Activated CD4-positive, alpha-beta T cell treated with anti-CD3 and anti-CD28 coated beads, Interleukin-2, amount 10 ng/mL, durations not matched to agents 7 days and 5 days (primary cell): ENCODE measurements at regions of chr4 and their contacts with region 1.

Region 1: DNA sequence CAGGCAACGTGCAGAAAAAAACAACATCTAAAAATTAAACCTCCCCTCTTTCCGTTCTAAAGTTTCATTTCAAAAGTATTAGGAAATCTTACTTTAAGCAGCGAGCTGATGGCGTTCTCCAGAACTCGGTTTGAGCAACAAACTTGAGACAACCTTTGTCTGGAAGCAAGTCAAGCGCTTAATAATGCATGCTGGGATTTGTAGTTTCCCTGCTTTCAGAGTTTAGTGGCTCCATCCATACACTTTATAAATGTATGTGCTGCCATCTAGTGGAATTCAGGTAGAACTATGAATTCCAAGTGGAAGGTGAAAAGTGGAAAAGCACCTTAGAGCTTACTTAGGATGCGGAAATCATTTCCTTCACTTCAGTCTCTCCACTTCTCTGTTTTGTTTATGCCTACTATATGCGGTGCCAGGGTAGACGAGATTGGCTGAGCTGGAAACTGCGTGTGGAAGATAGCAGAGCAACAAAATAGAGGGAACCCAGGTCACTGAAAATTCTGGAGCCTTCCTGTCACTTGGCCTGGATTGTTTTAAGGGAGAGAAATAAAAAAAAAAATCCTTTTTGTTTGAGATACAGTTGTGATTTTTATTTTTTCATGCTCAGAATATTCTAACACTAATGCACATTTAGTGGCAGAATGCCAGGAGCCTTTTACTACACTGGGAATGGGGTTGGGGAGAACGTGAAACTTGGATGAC is at the start of gene BDH2:
- DNase-seq: peak; percentile 77
- H3K4me3 Mint-ChIP-seq: peak within 1 kb of the TSS; percentile 85
- H3K27ac Mint-ChIP-seq: peak within 1 kb of the TSS; percentile 89
- H3K4me1 Mint-ChIP-seq: peaks cover 18% of the 10 kb centered on the region
- H3K27me3 Mint-ChIP-seq: no peaks in the 10 kb centered on the region
- total RNA-seq, gene BDH2: 15.5 to 17.2 TPM

Region 2: DNA sequence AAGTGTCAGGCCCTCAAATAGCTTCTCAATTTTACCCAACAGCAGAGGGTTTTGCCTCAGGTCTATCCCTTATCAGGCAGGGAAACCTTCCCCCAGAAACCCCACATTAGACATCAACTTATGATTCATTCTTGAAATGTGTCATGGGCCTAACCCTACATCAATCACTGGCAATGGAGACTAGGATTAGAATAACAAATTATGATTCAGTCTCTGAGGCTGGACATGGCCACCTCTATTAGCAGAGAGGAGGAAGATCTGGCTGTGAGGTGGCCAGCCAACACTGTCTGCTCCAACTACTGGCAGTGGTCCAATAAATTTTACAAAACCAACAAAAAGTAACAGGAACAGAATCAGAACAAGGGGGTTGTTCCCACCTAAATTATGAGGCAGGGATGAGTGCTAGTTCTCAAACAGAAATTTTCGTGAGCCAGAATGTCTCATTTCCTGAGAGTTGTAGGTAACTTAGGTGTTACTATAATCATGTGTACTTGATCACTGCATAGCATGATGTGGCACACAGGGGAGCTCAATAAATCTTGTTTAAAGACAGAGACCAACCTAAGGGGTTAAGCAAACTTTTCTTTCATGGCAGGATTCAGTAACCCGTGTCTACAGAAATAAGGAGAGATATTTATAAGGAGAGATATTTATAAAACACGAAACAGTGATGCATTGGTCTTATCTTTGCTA is 471.9 kb before region 1 on chr4:
- CTCF ChIA-PET with region 1: interaction called, 3 read pairs
- POLR2A ChIA-PET with region 1: interaction called, 12 read pairs
- DNase-seq: no peak
- H3K4me3 Mint-ChIP-seq: no peak overlapping the region
- H3K27ac Mint-ChIP-seq: no peak overlapping the region
- H3K4me1 Mint-ChIP-seq: peaks cover 69% of the 10 kb centered on the region
- H3K27me3 Mint-ChIP-seq: no peaks in the 10 kb centered on the region

Region 3: DNA sequence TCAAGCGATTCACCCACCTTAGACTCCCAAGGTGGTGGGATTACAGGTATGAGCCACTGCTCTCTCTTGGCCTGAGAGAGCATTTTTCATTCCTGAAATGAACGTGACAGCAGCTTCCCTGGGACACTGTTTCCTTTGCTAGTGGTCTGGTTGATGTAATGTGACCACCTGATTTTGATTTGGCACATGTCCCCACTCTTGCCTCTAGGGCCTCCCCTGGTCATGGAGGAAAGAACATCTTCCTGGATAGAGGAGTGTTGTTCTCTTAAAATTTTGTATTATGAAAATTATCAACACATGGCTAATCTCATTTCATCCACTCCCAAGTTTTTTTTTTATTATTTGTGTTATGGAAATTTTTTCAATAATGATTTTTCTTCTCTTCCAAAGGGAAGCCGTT is 47.1 kb before region 1 on chr4:
- CTCF ChIA-PET with region 1: no interaction called
- POLR2A ChIA-PET with region 1: no interaction called
- DNase-seq: no peak
- H3K4me3 Mint-ChIP-seq: no peak overlapping the region
- H3K27ac Mint-ChIP-seq: no peak overlapping the region
- H3K4me1 Mint-ChIP-seq: peaks cover 4% of the 10 kb centered on the region
- H3K27me3 Mint-ChIP-seq: no peaks in the 10 kb centered on the region

Region 4: GRCh38 chr4:103075901-103076739 is 23.7 kb before region 1 on chr4:
- CTCF ChIA-PET with region 1: interaction called, 17 read pairs
- POLR2A ChIA-PET with region 1: no interaction called
- DNase-seq: peak; percentile 71
- H3K4me3 Mint-ChIP-seq: peak overlapping the region; percentile 85
- H3K27ac Mint-ChIP-seq: peak overlapping the region; percentile 98
- H3K4me1 Mint-ChIP-seq: peaks cover 47% of the 10 kb centered on the region
- H3K27me3 Mint-ChIP-seq: no peaks in the 10 kb centered on the region